ENCODE measurements at regions of chr6 and their contacts with region 1.

Region 1: DNA sequence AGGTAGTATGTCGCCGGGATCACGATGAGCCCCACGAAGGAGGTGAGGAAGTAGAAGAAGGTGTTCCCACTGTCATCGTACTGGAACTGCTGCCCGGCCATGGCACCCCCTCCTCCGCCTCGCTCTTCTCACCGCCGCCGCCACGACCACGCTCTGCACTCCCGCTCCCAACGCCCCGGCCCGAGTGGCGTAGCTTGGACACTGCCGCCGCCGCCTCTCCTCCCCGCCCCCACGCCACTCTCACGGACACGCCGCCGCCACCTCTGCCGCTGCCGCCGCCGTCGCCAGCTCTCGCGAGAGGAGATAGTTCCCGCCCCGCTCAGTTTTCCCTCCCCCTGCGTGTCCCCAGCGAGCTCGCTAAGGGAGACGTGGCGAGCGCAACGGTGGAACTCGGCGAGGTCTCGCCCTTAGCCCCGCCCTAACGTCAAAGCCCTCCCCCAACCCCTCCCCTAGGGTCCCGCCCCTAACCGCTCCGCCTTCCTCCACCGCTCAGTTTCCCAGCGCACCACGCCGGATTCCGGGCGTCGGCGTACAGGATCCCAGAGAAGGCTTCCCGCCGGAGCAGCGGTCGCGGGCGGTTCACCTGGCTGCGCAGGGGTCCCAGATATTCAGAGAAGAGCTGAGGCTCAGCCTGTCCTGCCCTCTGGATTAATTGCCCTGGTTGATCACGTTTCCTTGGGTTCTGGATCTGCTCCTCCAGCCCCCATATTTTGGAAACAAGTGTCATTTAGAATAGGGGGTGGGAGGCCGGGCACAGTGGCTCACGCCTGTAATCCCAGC is at the start of gene SEC63:
- DNase-seq: peak; percentile 98
- H3K4me3 ChIP-seq: peak within 1 kb of the TSS; percentile 70 to 99 (median 96)
- H3K27ac ChIP-seq: peak within 1 kb of the TSS; percentile 91 to 97 (median 92)
- H3K4me1 ChIP-seq: peaks cover 21 to 46% (median 32%) of the 10 kb centered on the region in 4 donors
- H3K27me3 ChIP-seq: no peaks in the 10 kb centered on the region
- CTCF ChIP-seq: no peak
- EP300 ChIP-seq: no peak
- POLR2A ChIP-seq: peak; percentile 85
- total RNA-seq, gene SEC63: 24.2 to 44.9 (median 37.2) TPM

Region 2: DNA sequence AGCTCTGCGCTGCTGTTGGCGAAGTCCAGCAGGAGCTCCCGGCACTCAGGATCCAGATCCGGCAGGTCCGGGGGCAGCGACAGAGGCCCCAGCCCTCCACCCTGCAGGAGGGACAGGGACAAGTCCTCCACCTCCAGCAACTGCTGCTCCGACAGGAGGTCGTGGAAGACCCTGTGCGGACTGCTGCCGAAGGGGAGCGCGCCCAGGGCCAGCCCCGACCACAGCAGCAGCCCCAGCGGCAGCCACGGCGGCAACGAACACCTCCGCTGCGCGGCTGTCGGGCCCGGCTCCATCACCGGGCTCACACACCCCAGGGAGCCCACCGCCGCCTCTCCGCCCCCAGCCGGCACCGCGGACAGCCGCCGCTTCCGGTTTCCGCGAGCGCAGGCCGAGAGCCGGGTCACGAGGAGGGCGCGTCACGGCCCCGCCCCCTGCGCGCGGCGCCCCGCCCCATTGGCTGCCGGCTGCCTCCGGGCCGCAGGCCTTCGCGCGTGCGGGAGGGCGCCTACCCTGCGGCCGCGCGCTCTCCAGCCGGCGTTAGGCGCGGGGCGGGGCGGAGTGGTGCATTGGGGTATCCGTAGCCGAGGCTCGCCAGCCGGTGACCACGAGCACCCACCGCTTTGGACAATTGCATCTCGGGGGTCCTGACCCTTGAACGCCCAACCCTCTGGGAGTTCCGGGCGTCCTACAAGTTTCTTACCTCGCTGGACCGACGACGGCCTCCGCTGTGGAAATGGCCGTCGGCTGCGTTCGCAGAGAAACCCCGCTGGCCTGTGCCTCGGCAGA is 116.5 kb after region 1 on chr6 and contains the start of gene OSTM1:
- intact Hi-C with region 1: loop called (anchors 5 kb)
- DNase-seq: peak; percentile 95
- H3K4me3 ChIP-seq: peak within 1 kb of the TSS; percentile 69 to 97 (median 86)
- H3K27ac ChIP-seq: peak within 1 kb of the TSS; percentile 81 to 87 (median 86)
- H3K4me1 ChIP-seq: peaks cover 8 to 26% (median 23%) of the 10 kb centered on the region in 4 donors
- H3K27me3 ChIP-seq: no peaks in the 10 kb centered on the region
- CTCF ChIP-seq: peak in 1 of 3 experiments; percentile 17
- EP300 ChIP-seq: no peak
- POLR2A ChIP-seq: peak; percentile 51
- total RNA-seq, gene OSTM1: 48.2 to 74.4 (median 61.2) TPM

Measured in esophagus muscularis mucosa (tissue), 4 donors.